AG04449 (cell line): ENCODE measurements at regions of chr14 and their contacts with region 1.

Region 1: DNA sequence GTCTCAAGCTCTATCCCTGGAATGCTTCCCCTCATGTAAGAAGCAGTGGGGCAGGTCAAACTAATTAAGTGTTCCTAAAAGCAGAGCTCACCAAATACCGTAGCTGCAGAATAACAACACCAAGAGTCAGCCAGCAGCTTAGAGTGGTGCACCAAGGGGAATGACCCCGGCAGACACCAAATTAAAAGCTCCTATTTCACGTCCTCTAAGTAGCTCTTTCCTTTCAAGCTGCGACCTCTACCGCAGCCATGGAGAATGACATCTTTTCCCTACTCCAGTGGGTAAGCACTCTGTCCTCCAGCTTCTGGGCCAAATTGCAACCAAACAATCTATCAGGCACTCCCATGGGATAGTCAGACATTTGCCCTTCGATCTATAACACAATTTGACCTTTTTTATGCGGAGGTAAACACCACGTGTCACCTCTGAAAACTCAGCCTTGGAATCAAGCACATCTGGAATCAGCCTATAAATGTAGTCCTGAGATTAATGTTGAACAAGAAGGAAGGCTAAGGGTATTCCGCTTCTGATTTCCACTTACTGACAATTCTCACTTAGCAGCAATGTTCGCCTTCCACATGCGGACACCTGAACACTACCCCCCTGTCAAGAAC is 67.6 kb upstream of the CDKN3 start:
- DNase-seq: peak; percentile 16
- H3K4me3 ChIP-seq: no peak overlapping the region
- CTCF ChIP-seq: peak; percentile 77

Region 2: GRCh38 chr14:54312140-54312801 is 16.9 kb before region 1 on chr14:
- CTCF ChIA-PET with region 1: interaction called, 15 read pairs
- POLR2A ChIA-PET with region 1: no interaction called
- DNase-seq: peak; percentile 45
- H3K4me3 ChIP-seq: no peak overlapping the region
- CTCF ChIP-seq: no peak

Region 3: GRCh38 chr14:54317391-54317790 is 11.8 kb before region 1 on chr14:
- CTCF ChIA-PET with region 1: interaction called, 15 read pairs
- POLR2A ChIA-PET with region 1: no interaction called
- DNase-seq: no peak
- H3K4me3 ChIP-seq: no peak overlapping the region
- CTCF ChIP-seq: no peak